ENCODE measurements at regions of chr7 and their contacts with region 1.

Region 1: DNA sequence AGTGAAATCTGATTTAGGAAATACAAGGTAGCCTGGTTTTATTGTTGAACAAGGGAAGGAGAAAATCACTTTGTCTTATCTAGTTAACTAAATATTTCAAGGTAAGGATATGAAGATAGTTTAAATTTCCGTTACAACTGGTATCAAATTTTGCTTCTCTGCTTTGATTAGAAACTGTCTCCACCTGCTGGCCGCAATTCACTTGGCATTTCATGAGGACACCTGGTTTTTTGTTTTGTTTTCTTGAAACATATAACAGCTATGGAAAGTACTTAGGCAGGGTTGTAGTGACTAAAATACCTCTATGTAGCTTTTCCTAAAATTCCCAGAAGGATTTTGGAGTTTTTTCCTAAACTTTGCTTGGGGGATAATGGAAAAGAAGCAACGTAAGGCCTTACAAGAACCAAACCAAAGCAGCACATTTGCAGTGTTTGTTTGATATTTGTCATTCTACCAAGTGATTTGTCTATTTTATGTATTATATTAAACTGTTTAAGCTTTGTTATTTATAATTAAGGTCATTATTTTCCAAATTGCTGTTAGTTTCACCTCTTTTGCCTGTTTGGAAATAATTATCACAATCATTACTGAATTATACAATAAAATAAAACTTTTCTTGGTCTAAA is 73.6 kb downstream of the AHCYL2 start:
- DNase-seq: no peak
- H3K4me3 ChIP-seq: no peak overlapping the region
- CTCF ChIP-seq: peak; percentile 56

Region 2: GRCh38 chr7:129224251-129225205 is 73.9 kb before region 1 on chr7 and contains the start of gene AHCYL2:
- CTCF ChIA-PET with region 1: interaction called, 227 read pairs
- POLR2A ChIA-PET with region 1: no interaction called
- DNase-seq: peak; percentile 71
- H3K4me3 ChIP-seq: peak within 1 kb of the TSS; percentile 78
- CTCF ChIP-seq: no peak

Region 3: DNA sequence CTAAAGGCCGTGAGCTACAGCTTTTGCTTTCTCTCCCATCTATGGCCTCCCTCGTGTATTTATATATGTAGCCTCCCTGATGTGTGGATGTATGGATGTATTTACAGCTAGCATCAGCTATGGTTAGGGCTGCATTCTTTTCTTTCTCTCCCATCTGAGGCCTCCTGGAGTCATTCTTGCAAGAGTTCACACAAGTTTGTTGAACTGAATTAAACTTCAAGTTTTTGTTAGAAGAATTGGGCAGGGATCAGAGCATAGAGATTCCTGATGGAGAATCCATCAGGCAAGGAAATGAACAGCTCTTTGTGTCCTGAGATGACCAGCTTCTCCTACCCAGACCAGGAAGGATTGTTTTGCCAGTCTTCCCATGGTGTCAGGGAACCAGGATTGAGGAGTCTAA is 13.3 kb before region 1 on chr7:
- CTCF ChIA-PET with region 1: interaction called, 24 read pairs
- POLR2A ChIA-PET with region 1: no interaction called
- DNase-seq: no peak
- H3K4me3 ChIP-seq: no peak overlapping the region
- CTCF ChIP-seq: no peak

Measured in AG04449 (cell line).